ENCODE measurements at regions of chr18 and their contacts with region 1.

Region 1: GRCh38 chr18:72762515-72763122 is 105.2 kb downstream of the NETO1 start:
- DNase-seq: peak; percentile 69
- ATAC-seq: peak; percentile 76
- H3K4me3 ChIP-seq: no peak overlapping the region
- H3K27ac ChIP-seq: no peak overlapping the region
- H3K4me1 ChIP-seq: no peaks in the 10 kb centered on the region
- H3K27me3 ChIP-seq: no peaks in the 10 kb centered on the region
- CTCF ChIP-seq: peak; percentile 85
- POLR2A ChIP-seq: no peak
- RAD21 ChIP-seq: peak; percentile 90

Region 2: DNA sequence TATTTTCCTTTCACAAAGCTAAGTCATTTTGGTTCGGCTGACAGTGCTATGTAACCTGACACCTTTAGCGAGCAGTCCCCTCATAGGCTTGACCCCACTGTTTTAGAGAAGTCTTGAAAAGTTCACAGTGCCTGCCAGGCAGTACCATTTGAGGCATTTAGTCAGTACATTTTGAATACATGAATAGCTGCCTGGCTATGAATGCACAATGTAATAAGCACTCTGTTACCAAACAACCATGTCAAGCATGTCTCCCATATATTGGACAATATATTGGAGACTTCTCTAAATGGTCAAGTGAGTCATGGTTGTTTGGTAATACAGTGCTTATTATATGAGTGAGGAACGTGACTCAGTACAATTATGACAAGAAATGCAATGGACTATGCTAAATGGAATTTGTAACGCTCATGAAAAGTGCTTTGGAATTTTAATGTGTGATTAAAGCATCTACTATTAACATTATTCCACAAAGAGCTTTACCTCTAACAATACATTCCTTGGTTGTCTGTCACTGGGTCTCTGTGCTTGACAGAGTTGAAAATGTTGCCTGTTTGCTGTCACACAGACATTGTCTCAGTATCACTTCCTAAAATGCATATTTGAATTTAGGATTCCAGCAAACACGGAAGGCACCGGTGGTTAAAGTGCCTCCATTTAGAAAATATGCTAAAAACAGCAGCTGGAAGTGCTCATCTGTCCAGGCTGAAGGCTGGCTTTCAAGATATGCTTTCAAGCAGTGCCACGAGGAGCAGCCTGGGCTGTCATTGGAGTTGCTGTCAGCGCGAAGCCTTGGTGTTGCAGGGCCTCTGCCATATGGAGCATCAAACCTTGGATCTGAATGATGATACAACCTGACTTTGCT is 926.5 kb after region 1 on chr18:
- CTCF ChIA-PET with region 1: interaction called, 5 read pairs
- POLR2A ChIA-PET with region 1: no interaction called
- dilution Hi-C with region 1: no loop called
- in situ Hi-C with region 1: no loop called
- intact Hi-C with region 1: loop called (anchors 10 kb)
- DNase-seq: peak; percentile 98
- ATAC-seq: peak; percentile 77
- H3K4me3 ChIP-seq: no peak overlapping the region
- H3K27ac ChIP-seq: peak overlapping the region; percentile 96
- H3K4me1 ChIP-seq: peaks cover 34% of the 10 kb centered on the region
- H3K27me3 ChIP-seq: no peaks in the 10 kb centered on the region
- CTCF ChIP-seq: no peak
- POLR2A ChIP-seq: 0 out of 2 replicates have a peak, but pooled peaks have one; percentile 24
- RAD21 ChIP-seq: no peak; the same call in 1 of the 2 replicates

Region 3: DNA sequence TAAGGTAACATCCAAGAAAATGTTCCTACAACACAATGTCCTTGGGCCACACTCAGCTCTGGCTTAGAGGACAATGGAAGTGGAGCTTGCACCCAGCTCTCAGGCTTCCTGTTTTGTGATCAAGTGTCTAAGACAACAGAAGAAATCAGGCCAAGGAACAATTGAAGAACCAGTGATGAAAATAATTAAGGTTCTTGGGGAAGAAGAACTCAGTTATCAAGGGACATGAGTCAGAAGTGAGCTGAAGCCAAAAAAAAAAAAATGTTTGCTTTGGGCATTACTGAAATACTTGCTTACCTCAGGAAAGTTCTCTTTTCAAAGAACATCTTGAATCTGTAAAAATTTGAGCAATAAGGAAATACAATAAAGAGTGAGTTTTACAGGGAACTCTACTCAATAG is 1086.0 kb after region 1 on chr18:
- CTCF ChIA-PET with region 1: no interaction called
- POLR2A ChIA-PET with region 1: no interaction called
- dilution Hi-C with region 1: no loop called
- in situ Hi-C with region 1: loop called (anchors 25 kb)
- intact Hi-C with region 1: loop called (anchors 2 kb)
- DNase-seq: peak; percentile 88
- ATAC-seq: peak; percentile 74
- H3K4me3 ChIP-seq: no peak overlapping the region
- H3K27ac ChIP-seq: peak overlapping the region; percentile 79
- H3K4me1 ChIP-seq: peaks cover 11% of the 10 kb centered on the region
- H3K27me3 ChIP-seq: no peaks in the 10 kb centered on the region
- CTCF ChIP-seq: no peak
- POLR2A ChIP-seq: no peak
- RAD21 ChIP-seq: no peak

Region 4: GRCh38 chr18:74081966-74082741 is 1319.5 kb after region 1 on chr18:
- CTCF ChIA-PET with region 1: no interaction called
- POLR2A ChIA-PET with region 1: no interaction called
- dilution Hi-C with region 1: no loop called
- in situ Hi-C with region 1: no loop called
- intact Hi-C with region 1: loop called (anchors 1 kb)
- DNase-seq: peak; percentile 63
- ATAC-seq: peak; percentile 99
- H3K4me3 ChIP-seq: no peak overlapping the region
- H3K27ac ChIP-seq: no peak overlapping the region
- H3K4me1 ChIP-seq: peaks cover 7% of the 10 kb centered on the region
- H3K27me3 ChIP-seq: peaks cover 14% of the 10 kb centered on the region
- CTCF ChIP-seq: peak; percentile 73
- POLR2A ChIP-seq: no peak
- RAD21 ChIP-seq: peak; percentile 62

Region 5: DNA sequence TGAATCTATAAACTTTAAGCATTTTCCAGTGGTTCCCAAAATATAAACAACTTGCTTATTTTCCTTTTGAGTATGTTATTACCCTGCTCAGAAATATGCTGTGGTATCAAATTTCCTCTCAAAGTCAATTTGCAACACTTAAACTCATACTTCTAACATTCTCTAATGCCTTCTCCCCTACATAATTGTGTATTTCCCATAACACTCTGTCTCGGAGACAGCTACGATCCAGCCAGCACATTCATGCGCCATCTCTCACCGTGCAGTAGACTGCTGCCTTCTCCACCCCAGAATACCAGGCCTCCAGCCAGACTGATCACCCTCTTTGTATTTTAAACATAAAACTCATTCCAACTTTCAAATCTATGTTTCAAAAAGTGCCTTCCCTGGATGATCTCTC is 1427.5 kb after region 1 on chr18:
- CTCF ChIA-PET with region 1: no interaction called
- POLR2A ChIA-PET with region 1: no interaction called
- dilution Hi-C with region 1: no loop called
- in situ Hi-C with region 1: no loop called
- intact Hi-C with region 1: loop called (anchors 2 kb)
- DNase-seq: peak; percentile 76
- ATAC-seq: peak; percentile 90
- H3K4me3 ChIP-seq: no peak overlapping the region
- H3K27ac ChIP-seq: peak overlapping the region; percentile 95; the same call in 1 of the 2 replicates
- H3K4me1 ChIP-seq: peaks cover 11% of the 10 kb centered on the region
- H3K27me3 ChIP-seq: peaks cover under 1% of the 10 kb centered on the region; the same call in 1 of the 2 replicates
- CTCF ChIP-seq: no peak
- POLR2A ChIP-seq: no peak
- RAD21 ChIP-seq: no peak